ENCODE measurements at regions of chr17 and their contacts with region 1.

Region 1: DNA sequence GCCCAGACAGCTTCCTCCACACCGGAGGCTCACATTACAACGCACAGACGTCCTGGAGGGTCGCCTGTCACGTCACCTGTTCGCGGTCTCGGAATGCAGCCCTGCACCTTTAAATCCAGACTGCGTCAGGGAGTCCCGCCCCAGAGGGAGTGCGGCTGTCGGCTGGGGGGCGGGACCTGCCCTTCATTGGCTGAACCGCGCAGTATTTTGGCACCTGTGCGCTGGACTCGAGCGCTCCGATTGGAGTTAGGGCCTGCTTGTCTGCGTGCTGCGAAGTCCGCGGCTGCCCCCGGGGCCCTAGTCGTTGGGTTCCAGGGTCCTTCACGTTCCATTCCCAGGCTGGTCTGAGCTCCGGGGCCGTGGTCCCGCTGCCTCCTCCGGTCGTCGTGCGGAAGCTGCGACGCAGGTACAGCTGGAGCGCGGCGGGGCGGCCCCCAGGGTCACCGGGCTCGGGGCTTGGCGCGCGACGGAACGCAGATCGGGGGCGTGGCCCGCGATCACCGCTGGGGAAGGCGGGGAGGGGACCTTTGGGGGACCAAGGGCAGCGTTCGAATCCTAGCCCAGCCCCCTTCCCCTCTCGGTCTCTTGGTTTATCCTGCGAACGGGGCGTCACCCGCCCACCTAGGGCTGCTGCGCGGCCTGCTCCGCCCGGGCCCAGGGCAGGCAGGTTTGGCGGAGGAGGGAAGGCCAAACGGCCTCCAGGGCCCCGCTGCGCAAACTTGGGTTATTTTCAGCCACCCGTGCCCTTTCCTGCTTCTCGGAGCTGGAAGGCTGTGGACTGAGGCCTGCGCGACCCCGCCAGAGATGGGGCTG is at the start of gene MIEF2:
- DNase-seq: peak; percentile 94
- ATAC-seq: peak; percentile 85
- H3K4me3 ChIP-seq: peak within 1 kb of the TSS; percentile 45 to 88 (median 77)
- H3K4me3 Mint-ChIP-seq: peak within 1 kb of the TSS; percentile 86
- H3K27ac ChIP-seq: peak within 1 kb of the TSS; percentile 84 to 89
- H3K27ac Mint-ChIP-seq: peak within 1 kb of the TSS; percentile 87
- H3K4me1 ChIP-seq: peaks cover 28 to 43% of the 10 kb centered on the region in 2 donors
- H3K4me1 Mint-ChIP-seq: peaks cover 31% of the 10 kb centered on the region
- H3K27me3 ChIP-seq: no peaks in the 10 kb centered on the region
- H3K27me3 Mint-ChIP-seq: no peaks in the 10 kb centered on the region
- CTCF ChIP-seq: no peak
- total RNA-seq, gene MIEF2: 16.3 and 18.7 TPM in 2 replicates

Region 2: GRCh38 chr17:18217412-18218015 is 43.0 kb before region 1 on chr17:
- CTCF ChIA-PET with region 1: no interaction called
- POLR2A ChIA-PET with region 1: no interaction called
- intact Hi-C with region 1: loop called (anchors 2 kb)
- DNase-seq: peak; percentile 77
- ATAC-seq: peak; percentile 94
- H3K4me3 ChIP-seq: no peak overlapping the region
- H3K4me3 Mint-ChIP-seq: no peak overlapping the region
- H3K27ac ChIP-seq: no peak overlapping the region
- H3K27ac Mint-ChIP-seq: no peak overlapping the region
- H3K4me1 ChIP-seq: no peaks in the 10 kb centered on the region
- H3K4me1 Mint-ChIP-seq: peaks cover 3% of the 10 kb centered on the region
- H3K27me3 ChIP-seq: no peaks in the 10 kb centered on the region
- H3K27me3 Mint-ChIP-seq: no peaks in the 10 kb centered on the region
- CTCF ChIP-seq: peak; percentile 89

Region 3: GRCh38 chr17:18225121-18225566 is 35.4 kb before region 1 on chr17:
- CTCF ChIA-PET with region 1: no interaction called
- POLR2A ChIA-PET with region 1: interaction called, 3 read pairs
- intact Hi-C with region 1: loop called (anchors 1 kb)
- DNase-seq: peak; percentile 95
- ATAC-seq: peak; percentile 98
- H3K4me3 ChIP-seq: peak overlapping the region in 4 of 5 experiments; percentile 19 to 45 (median 40)
- H3K4me3 Mint-ChIP-seq: peak overlapping the region; percentile 72
- H3K27ac ChIP-seq: no peak overlapping the region
- H3K27ac Mint-ChIP-seq: no peak overlapping the region
- H3K4me1 ChIP-seq: peaks cover 10 to 16% of the 10 kb centered on the region in 2 donors
- H3K4me1 Mint-ChIP-seq: peaks cover 10% of the 10 kb centered on the region
- H3K27me3 ChIP-seq: no peaks in the 10 kb centered on the region
- H3K27me3 Mint-ChIP-seq: no peaks in the 10 kb centered on the region
- CTCF ChIP-seq: no peak

Region 4: GRCh38 chr17:18314731-18315561 is 54.4 kb after region 1 on chr17 and contains the starts of genes SMCR8 and TOP3A:
- CTCF ChIA-PET with region 1: no interaction called
- POLR2A ChIA-PET with region 1: interaction called, 4 read pairs
- intact Hi-C with region 1: loop called (anchors 1 kb)
- DNase-seq: peak; percentile 96
- ATAC-seq: peak; percentile 93
- H3K4me3 ChIP-seq: peak within 1 kb of the TSS; percentile 74 to 98 (median 87)
- H3K4me3 Mint-ChIP-seq: peak within 1 kb of the TSS; percentile 96
- H3K27ac ChIP-seq: peak within 1 kb of the TSS; percentile 91 to 99
- H3K27ac Mint-ChIP-seq: peak within 1 kb of the TSS; percentile 98
- H3K4me1 ChIP-seq: peaks cover 43 to 59% of the 10 kb centered on the region in 2 donors
- H3K4me1 Mint-ChIP-seq: peaks cover 74% of the 10 kb centered on the region
- H3K27me3 ChIP-seq: no peaks in the 10 kb centered on the region
- H3K27me3 Mint-ChIP-seq: no peaks in the 10 kb centered on the region
- CTCF ChIP-seq: no peak
- total RNA-seq, gene SMCR8: 47.3 and 48.0 TPM in 2 replicates
- total RNA-seq, gene TOP3A: 55.8 and 61.7 TPM in 2 replicates

Region 5: DNA sequence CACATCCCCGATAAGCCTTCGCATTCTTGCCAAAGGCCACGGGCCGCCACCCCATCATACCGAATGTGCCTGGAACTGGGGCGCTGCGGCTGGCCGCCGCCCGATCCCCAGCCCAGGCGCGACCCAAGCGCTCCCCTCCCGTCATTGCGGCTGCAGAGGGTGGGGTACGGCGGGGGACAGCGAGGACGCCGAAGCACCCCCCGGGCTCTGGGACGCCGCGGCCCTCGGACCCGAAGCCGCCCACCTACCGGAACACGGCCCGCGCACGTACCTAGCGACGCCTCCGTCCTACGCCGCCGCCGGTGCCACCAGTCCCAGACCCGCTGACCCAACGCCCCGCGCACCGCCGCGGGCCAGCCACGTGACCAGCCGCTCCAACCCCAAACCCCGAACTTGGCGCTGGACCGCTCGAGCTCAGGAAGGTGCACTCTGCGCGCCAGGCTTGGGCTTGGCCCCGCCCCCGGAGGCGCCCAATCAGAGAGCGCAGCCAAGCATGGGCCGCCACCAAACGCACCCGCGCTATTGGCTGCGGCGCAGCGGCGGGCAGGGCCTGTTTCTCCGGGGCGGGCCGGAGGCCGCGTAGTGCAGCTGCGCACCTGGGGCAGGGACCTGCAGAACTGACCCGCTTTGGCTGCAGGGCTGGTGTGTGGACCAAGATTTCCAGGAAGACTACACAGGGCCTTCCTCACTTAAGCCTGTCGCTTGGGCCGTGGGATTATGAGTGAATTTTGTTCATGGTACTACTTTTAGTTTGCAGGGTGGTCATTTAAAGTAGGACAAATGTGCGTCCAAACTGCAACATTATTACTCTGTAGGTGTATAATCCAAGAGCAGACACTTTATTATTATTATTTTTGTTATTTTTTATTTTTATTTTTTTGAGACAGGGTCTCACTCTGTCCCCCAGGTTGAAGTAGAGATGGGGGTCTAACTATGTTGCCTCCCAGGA is 102.8 kb after region 1 on chr17 and contains the start of gene SHMT1:
- CTCF ChIA-PET with region 1: no interaction called
- POLR2A ChIA-PET with region 1: interaction called, 5 read pairs
- intact Hi-C with region 1: loop called (anchors 1 kb)
- DNase-seq: peak; percentile 91
- ATAC-seq: peak; percentile 100
- H3K4me3 ChIP-seq: peak within 1 kb of the TSS; percentile 47 to 89 (median 66)
- H3K4me3 Mint-ChIP-seq: peak within 1 kb of the TSS; percentile 95
- H3K27ac ChIP-seq: peak within 1 kb of the TSS in 1 of 2 donors; percentile 32
- H3K27ac Mint-ChIP-seq: peak within 1 kb of the TSS; percentile 89
- H3K4me1 ChIP-seq: peaks cover 5 to 14% of the 10 kb centered on the region in 2 donors
- H3K4me1 Mint-ChIP-seq: peaks cover 14% of the 10 kb centered on the region
- H3K27me3 ChIP-seq: no peaks in the 10 kb centered on the region
- H3K27me3 Mint-ChIP-seq: no peaks in the 10 kb centered on the region
- CTCF ChIP-seq: no peak
- total RNA-seq, gene SHMT1: 23.5 and 28.0 TPM in 2 replicates

Region 6: DNA sequence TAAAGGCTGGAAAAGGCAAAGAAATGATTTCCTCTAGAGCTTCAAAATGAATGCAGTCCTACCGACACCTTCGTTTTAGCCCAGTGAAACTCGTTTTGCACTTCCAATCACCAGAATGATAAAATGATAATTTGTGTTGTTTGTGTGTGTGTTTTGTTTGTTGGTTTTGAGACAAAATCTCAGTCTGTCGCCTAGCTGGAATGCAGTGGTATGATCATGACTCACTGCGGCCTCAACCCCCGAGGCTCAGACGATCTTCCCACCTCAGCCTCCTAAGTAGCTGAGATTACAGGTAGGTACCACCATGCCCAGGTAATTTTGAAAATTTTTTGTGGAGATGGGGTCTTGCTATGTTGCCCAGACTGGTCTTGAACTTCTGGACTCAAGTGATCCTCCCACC is 113.7 kb after region 1 on chr17:
- CTCF ChIA-PET with region 1: no interaction called
- POLR2A ChIA-PET with region 1: no interaction called
- intact Hi-C with region 1: no loop called
- DNase-seq: no peak
- ATAC-seq: no peak
- H3K4me3 ChIP-seq: no peak overlapping the region
- H3K4me3 Mint-ChIP-seq: no peak overlapping the region
- H3K27ac ChIP-seq: no peak overlapping the region
- H3K27ac Mint-ChIP-seq: no peak overlapping the region
- H3K4me1 ChIP-seq: peaks cover 7 to 13% of the 10 kb centered on the region in 2 donors
- H3K4me1 Mint-ChIP-seq: peaks cover 7% of the 10 kb centered on the region
- H3K27me3 ChIP-seq: peaks cover 0 to 6% (median 2%) of the 10 kb centered on the region in 4 experiments
- H3K27me3 Mint-ChIP-seq: peaks cover 8% of the 10 kb centered on the region
- CTCF ChIP-seq: no peak